SK-N-SH (cell line): ENCODE measurements at regions of chr2 and their contacts with region 1.

Region 1: GRCh38 chr2:70871398-70872211 is 36.0 kb upstream of the CD207 start:
- DNase-seq: peak; percentile 90
- H3K4me3 ChIP-seq: peak overlapping the region; percentile 19 to 57; a peak in 2 of 4 replicates
- H3K27ac ChIP-seq: no peak overlapping the region
- H3K4me1 ChIP-seq: peaks cover 0 to 10% of the 10 kb centered on the region in 2 experiments; a peak in 1 of 4 replicates
- H3K27me3 ChIP-seq: no peaks in the 10 kb centered on the region
- CTCF ChIP-seq: peak; percentile 88
- EP300 ChIP-seq: no peak
- RAD21 ChIP-seq: peak; percentile 95

Region 2: DNA sequence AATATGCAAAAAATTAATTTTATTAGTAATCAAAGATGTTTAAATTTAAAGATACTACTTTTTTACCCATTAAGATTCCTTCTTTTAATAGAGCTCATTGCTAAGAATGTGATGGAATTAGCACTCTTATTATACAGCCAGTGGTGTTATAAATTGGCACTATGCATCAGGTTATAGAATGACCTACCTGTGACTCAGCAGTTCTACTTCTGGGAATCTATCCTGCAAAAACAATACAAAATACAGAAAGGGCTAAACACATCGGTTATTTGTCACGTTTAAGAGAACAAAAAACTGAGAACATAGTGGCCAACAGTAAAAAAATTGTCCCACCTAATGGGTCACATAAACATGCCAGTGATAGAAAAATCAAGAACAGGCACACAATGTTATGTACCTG is 94.2 kb before region 1 on chr2:
- CTCF ChIA-PET with region 1: no interaction called
- POLR2A ChIA-PET with region 1: no interaction called
- DNase-seq: no peak
- H3K4me3 ChIP-seq: no peak overlapping the region
- H3K27ac ChIP-seq: no peak overlapping the region
- H3K4me1 ChIP-seq: no peaks in the 10 kb centered on the region
- H3K27me3 ChIP-seq: peaks cover 4% of the 10 kb centered on the region
- CTCF ChIP-seq: no peak
- EP300 ChIP-seq: no peak
- RAD21 ChIP-seq: no peak

Region 3: GRCh38 chr2:70842401-70842800 is 29.2 kb before region 1 on chr2:
- CTCF ChIA-PET with region 1: interaction called, 10 read pairs
- POLR2A ChIA-PET with region 1: no interaction called
- DNase-seq: no peak
- H3K4me3 ChIP-seq: no peak overlapping the region
- H3K27ac ChIP-seq: no peak overlapping the region
- H3K4me1 ChIP-seq: no peaks in the 10 kb centered on the region
- H3K27me3 ChIP-seq: no peaks in the 10 kb centered on the region; the same call in 1 of the 2 replicates
- CTCF ChIP-seq: no peak
- EP300 ChIP-seq: no peak
- RAD21 ChIP-seq: no peak

Region 4: DNA sequence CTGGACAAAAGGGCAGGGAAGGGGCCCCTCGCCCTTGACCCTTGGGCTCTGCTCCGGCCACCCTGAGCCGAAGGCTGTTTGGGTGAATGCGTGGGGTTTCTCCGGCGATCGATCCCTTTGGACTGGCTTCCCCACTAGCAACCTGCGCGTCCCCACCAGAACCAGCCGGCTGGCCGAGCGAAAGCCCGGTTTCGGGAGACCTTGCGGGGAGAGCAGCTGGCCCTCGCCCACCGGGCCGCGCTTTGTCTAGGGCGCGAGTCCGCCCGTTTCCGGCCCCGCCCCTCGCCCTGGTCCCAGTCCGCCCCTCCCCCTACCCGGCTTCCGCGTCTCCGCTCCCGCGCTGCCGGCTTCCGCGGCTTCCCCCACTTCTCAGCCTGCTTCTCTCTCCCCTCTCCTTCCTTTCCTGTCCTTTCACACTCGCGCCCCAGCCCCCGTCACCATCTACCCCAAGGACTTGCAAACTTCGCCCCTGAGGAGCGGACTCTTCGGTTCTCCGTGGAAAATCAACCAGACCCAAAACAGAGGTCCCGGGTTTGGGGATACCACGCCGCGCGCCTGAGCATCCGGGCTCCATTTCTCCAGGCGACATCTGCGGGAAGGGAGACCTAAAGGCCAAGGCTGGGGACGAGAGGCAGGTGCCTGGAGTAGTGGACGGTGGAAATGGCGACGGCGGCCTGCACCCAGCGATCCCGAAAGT is 16.1 kb after region 1 on chr2:
- CTCF ChIA-PET with region 1: interaction called, 18 read pairs
- POLR2A ChIA-PET with region 1: no interaction called
- DNase-seq: peak; percentile 70
- H3K4me3 ChIP-seq: peak overlapping the region in 1 of 2 experiments; percentile 21; a peak in 1 of 4 replicates
- H3K27ac ChIP-seq: no peak overlapping the region
- H3K4me1 ChIP-seq: no peaks in the 10 kb centered on the region
- H3K27me3 ChIP-seq: no peaks in the 10 kb centered on the region
- CTCF ChIP-seq: no peak
- EP300 ChIP-seq: no peak
- RAD21 ChIP-seq: no peak

Region 5: GRCh38 chr2:70907130-70908057 is 35.8 kb after region 1 on chr2:
- CTCF ChIA-PET with region 1: interaction called, 26 read pairs
- POLR2A ChIA-PET with region 1: no interaction called
- DNase-seq: no peak
- H3K4me3 ChIP-seq: no peak overlapping the region
- H3K27ac ChIP-seq: no peak overlapping the region
- H3K4me1 ChIP-seq: peaks cover 0 to 4% of the 10 kb centered on the region in 2 experiments; a peak in 2 of 4 replicates
- H3K27me3 ChIP-seq: no peaks in the 10 kb centered on the region
- CTCF ChIP-seq: no peak
- EP300 ChIP-seq: no peak
- RAD21 ChIP-seq: no peak

Region 6: GRCh38 chr2:70935468-70936164 is 64.0 kb after region 1 on chr2 and contains the start of gene ATP6V1B1:
- CTCF ChIA-PET with region 1: interaction called, 63 read pairs
- POLR2A ChIA-PET with region 1: no interaction called
- DNase-seq: no peak
- H3K4me3 ChIP-seq: no peak within 1 kb of the TSS
- H3K27ac ChIP-seq: no peak within 1 kb of the TSS
- H3K4me1 ChIP-seq: peaks cover 0 to 5% of the 10 kb centered on the region in 2 experiments; a peak in 1 of 4 replicates
- H3K27me3 ChIP-seq: no peaks in the 10 kb centered on the region
- CTCF ChIP-seq: no peak
- EP300 ChIP-seq: no peak
- RAD21 ChIP-seq: no peak
- polyA plus RNA-seq, gene ATP6V1B1: 4.9 and 6.1 TPM in 2 replicates

Region 7: DNA sequence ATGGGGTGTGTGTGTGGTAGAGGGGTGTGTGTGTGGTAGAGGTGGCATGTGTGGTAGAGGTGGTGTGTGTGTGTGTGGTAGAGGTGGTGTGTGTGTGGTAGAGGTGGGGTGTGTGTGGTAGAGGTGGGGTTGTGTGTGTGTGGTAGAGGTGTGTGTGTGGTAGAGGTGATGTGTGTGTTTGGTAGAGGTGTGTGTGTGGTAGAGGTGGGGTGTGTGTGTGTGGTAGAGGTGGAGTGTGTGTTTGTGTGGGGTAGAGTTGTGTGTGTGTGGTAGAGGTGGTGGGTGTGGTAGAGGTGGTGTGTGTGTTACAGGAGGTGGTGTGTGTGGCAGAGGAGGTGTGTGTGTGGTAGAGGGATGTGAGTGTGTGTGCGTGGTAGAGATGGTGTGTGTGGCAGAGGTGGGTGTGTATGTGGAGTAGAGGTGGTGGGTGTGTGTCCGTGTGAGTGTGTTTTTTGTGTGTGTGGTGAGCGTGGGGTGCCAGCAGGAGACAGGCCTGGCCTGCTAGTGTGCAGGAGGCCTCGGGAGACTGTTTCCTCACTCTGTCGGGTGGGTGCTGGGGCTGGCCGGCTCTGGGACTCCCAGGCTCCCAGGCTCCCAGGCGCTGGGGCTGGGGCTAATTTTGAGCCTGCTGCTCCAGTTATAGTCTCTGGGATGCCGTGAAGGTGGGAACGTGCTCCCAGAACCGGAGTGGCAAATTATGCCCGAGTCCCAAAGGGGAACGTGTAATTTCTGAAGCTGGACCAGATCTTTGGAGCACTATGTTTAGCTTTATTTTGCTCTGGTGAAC is 746.9 kb after region 1 on chr2:
- CTCF ChIA-PET with region 1: no interaction called
- POLR2A ChIA-PET with region 1: no interaction called
- DNase-seq: peak; percentile 53
- H3K4me3 ChIP-seq: no peak overlapping the region
- H3K27ac ChIP-seq: no peak overlapping the region
- H3K4me1 ChIP-seq: peaks cover 0 to 2% of the 10 kb centered on the region in 2 experiments; a peak in 1 of 4 replicates
- H3K27me3 ChIP-seq: no peaks in the 10 kb centered on the region
- CTCF ChIP-seq: no peak
- EP300 ChIP-seq: no peak
- RAD21 ChIP-seq: peak; percentile 12; the same call in 1 of the 2 replicates